ENCODE measurements at regions of chr1 and their contacts with region 1.

Region 1: GRCh38 chr1:23634842-23635651 is 56.6 kb upstream of the RPL11 start:
- DNase-seq: peak; percentile 32 to 77
- ATAC-seq: peak; percentile 52 to 78 (median 70)
- H3K4me3 ChIP-seq: peak overlapping the region; percentile 13 to 57 (median 44)
- H3K27ac ChIP-seq: peak overlapping the region; percentile 38 to 94 (median 80)
- H3K4me1 ChIP-seq: peaks cover 2 to 46% (median 18%) of the 10 kb centered on the region in 9 donors
- H3K27me3 ChIP-seq: no peaks in the 10 kb centered on the region
- CTCF ChIP-seq: peak; percentile 89 to 96 (median 93)

Region 2: DNA sequence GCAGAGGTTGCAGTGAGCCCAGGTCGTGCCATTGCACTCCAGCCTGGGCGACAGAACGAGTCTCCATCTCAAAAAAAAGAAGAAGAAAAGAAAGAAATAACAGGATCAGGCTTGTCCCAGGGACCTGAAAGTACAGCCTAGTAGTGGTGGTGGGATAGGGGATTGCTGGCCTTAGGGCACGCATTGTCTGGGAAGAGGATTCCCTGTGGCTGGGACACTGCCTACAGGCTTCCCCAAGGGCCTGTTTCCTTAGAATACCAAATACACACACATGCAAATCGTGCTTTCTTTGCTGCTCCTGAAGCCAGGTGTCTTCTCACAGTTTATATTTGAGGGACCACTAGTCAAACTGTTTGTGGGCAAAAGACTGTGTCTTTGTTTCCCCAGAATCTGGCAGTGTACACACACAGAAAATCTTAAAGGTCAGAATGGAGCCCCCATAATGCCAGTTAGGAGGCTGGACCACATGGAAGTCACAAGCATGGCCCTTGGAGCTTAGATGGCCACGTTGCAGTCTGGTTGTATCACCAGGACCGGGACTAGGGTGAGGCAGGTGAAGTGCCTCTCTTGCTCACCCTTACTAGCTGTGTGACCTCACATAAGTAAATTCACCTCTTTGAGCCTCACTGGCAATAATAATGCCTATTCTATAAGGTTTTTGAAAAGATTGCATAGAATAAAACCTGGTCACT is 138.4 kb before region 1 on chr1:
- intact Hi-C with region 1: loop called in 5 of 10 experiments (anchors 5 kb)
- DNase-seq: no peak
- ATAC-seq: peak in 6 of 8 donors; percentile 18 to 40 (median 30)
- H3K4me3 ChIP-seq: no peak overlapping the region
- H3K27ac ChIP-seq: no peak overlapping the region
- H3K4me1 ChIP-seq: peaks cover 0 to 9% (median 0%) of the 10 kb centered on the region in 9 donors
- H3K27me3 ChIP-seq: no peaks in the 10 kb centered on the region
- CTCF ChIP-seq: no peak

Region 3: DNA sequence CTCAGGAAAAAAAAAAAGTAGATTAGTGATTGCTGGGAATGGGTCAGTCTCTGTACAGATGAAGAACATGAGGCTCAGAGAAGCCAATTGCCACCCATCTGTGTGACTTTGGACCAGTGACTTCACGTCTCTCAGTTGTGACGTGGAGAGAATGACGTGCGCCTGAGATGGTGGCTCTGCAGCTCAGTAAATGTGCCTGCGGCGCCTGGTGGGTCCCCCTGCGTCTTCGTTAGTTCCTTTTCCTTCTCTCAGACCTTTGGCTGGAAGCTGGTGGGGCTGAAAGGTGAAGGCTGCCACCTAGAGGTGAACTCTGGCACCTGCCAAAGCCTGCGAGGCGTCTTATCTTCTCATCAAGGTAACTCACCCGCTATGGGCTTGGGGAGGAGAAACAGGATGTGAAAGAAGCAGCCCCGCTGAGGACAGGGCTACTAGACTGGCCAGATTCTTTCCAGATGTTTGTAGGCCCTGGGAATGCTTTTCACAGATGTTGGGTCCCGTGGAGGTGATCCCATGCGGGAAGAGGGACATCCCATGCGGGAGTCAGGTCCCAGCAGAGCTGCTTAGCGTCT is 95.3 kb before region 1 on chr1:
- intact Hi-C with region 1: loop called in 9 of 10 experiments (anchors 1 to 2 kb)
- DNase-seq: peak; percentile 80 to 86
- ATAC-seq: peak; percentile 76 to 91 (median 88)
- H3K4me3 ChIP-seq: peak overlapping the region in 6 of 10 donors; percentile 1 to 22 (median 9)
- H3K27ac ChIP-seq: peak overlapping the region in 2 of 10 donors; percentile 34 to 40
- H3K4me1 ChIP-seq: peaks cover 0 to 22% (median 9%) of the 10 kb centered on the region in 9 donors
- H3K27me3 ChIP-seq: no peaks in the 10 kb centered on the region
- CTCF ChIP-seq: peak; percentile 70 to 96 (median 92)

Region 4: GRCh38 chr1:23591460-23592208 is 43.4 kb before region 1 on chr1:
- intact Hi-C with region 1: loop called in 3 of 10 experiments (anchors 2 to 5 kb)
- DNase-seq: peak; percentile 25 to 38
- ATAC-seq: peak; percentile 46 to 89 (median 57)
- H3K4me3 ChIP-seq: no peak overlapping the region
- H3K27ac ChIP-seq: peak overlapping the region in 6 of 10 donors; percentile 9 to 68 (median 50)
- H3K4me1 ChIP-seq: peaks cover 0 to 44% (median 15%) of the 10 kb centered on the region in 9 donors
- H3K27me3 ChIP-seq: no peaks in the 10 kb centered on the region
- CTCF ChIP-seq: no peak

Region 5: GRCh38 chr1:23699280-23700179 is 64.5 kb after region 1 on chr1:
- intact Hi-C with region 1: no loop called
- DNase-seq: no peak
- ATAC-seq: peak in 1 of 8 donors; percentile 19
- H3K4me3 ChIP-seq: no peak overlapping the region
- H3K27ac ChIP-seq: no peak overlapping the region
- H3K4me1 ChIP-seq: peaks cover 0 to 51% (median 27%) of the 10 kb centered on the region in 9 donors
- H3K27me3 ChIP-seq: no peaks in the 10 kb centered on the region
- CTCF ChIP-seq: no peak